CD4-positive, alpha-beta T cell (primary cell): ENCODE measurements at regions of chr6 and their contacts with region 1.

Region 1: DNA sequence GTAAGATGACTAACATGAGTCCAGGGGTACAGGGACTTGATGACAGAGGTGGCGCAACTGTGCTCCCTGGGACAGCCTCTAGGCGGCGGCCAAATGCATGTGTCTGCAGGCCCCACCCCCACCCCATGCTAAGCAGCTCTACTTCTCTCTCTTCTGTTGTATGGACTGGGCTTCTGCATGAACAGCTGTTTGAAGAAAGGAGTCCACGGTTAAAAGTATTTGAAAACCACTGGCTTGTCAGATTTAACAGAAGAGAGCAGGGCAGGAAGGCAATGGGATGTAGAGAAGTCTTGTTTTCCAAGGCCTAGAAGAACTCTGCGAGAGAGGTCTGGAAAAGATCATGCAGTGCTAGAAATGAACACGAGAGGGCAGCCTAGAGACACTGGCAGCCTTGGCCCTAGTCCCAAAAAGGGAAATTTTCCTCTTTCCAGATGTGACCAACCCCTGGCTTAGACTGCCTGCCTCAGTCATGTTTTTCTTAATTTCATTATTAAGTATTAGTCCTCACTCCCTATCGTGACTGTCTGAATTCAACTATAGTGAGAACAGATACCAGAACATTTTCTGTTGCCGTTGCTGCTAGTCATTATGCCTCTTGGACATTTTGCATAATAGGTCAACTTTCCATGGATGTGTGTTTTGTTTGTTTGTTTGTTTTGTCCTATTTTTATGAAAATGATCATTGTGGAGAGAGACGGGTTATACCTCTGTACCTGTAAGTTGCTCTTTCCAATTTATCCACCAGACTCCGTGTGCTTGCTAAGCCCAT is 265.0 kb downstream of the ADGRG6 start:
- DNase-seq: peak; percentile 14 to 76 (median 47)
- ATAC-seq: peak; percentile 62
- H3K4me3 ChIP-seq: no peak overlapping the region
- H3K4me3 Mint-ChIP-seq: peak overlapping the region; percentile 57
- H3K27ac ChIP-seq: no peak overlapping the region
- H3K27ac Mint-ChIP-seq: peak overlapping the region; percentile 79
- H3K4me1 ChIP-seq: peaks cover 35% of the 10 kb centered on the region
- H3K4me1 Mint-ChIP-seq: peaks cover 77% of the 10 kb centered on the region
- H3K27me3 ChIP-seq: no peaks in the 10 kb centered on the region
- H3K27me3 Mint-ChIP-seq: no peaks in the 10 kb centered on the region
- CTCF ChIP-seq: peak; percentile 82

Region 2: GRCh38 chr6:142155895-142156757 is 410.7 kb before region 1 on chr6:
- CTCF ChIA-PET with region 1: no interaction called
- POLR2A ChIA-PET with region 1: no interaction called
- intact Hi-C with region 1: loop called (anchors 10 kb)
- DNase-seq: peak in 3 of 14 experiments; percentile 38 to 48 (median 45)
- ATAC-seq: peak; percentile 76
- H3K4me3 ChIP-seq: no peak overlapping the region
- H3K4me3 Mint-ChIP-seq: no peak overlapping the region
- H3K27ac ChIP-seq: no peak overlapping the region
- H3K27ac Mint-ChIP-seq: peak overlapping the region; percentile 28
- H3K4me1 ChIP-seq: peaks cover 4% of the 10 kb centered on the region
- H3K4me1 Mint-ChIP-seq: peaks cover 67% of the 10 kb centered on the region
- H3K27me3 ChIP-seq: no peaks in the 10 kb centered on the region
- H3K27me3 Mint-ChIP-seq: no peaks in the 10 kb centered on the region
- CTCF ChIP-seq: peak; percentile 68

Region 3: DNA sequence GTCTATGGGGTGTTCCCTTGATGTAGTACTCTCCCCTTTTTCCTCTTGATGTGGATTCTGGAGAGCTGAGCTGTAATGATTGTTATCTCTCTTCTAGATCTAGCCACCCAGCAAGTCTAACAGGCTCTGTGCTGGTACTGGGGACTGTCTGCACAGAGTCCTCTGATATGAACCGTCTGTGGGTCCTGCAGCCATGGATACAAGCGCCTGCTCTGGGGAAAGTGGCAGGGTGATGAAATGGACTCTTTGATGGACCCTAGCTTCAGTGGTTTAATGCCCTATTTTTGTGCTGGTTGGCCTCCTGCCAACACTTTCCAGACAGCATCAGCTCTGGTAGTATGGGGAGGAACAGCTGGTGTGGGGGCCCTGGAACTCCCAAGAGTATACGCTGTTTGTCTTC is 48.7 kb before region 1 on chr6:
- CTCF ChIA-PET with region 1: no interaction called
- POLR2A ChIA-PET with region 1: no interaction called
- intact Hi-C with region 1: no loop called
- DNase-seq: no peak
- ATAC-seq: no peak
- H3K4me3 ChIP-seq: no peak overlapping the region
- H3K4me3 Mint-ChIP-seq: no peak overlapping the region
- H3K27ac ChIP-seq: no peak overlapping the region
- H3K27ac Mint-ChIP-seq: no peak overlapping the region
- H3K4me1 ChIP-seq: peaks cover 3% of the 10 kb centered on the region
- H3K4me1 Mint-ChIP-seq: no peaks in the 10 kb centered on the region
- H3K27me3 ChIP-seq: no peaks in the 10 kb centered on the region
- H3K27me3 Mint-ChIP-seq: no peaks in the 10 kb centered on the region
- CTCF ChIP-seq: no peak

Region 4: DNA sequence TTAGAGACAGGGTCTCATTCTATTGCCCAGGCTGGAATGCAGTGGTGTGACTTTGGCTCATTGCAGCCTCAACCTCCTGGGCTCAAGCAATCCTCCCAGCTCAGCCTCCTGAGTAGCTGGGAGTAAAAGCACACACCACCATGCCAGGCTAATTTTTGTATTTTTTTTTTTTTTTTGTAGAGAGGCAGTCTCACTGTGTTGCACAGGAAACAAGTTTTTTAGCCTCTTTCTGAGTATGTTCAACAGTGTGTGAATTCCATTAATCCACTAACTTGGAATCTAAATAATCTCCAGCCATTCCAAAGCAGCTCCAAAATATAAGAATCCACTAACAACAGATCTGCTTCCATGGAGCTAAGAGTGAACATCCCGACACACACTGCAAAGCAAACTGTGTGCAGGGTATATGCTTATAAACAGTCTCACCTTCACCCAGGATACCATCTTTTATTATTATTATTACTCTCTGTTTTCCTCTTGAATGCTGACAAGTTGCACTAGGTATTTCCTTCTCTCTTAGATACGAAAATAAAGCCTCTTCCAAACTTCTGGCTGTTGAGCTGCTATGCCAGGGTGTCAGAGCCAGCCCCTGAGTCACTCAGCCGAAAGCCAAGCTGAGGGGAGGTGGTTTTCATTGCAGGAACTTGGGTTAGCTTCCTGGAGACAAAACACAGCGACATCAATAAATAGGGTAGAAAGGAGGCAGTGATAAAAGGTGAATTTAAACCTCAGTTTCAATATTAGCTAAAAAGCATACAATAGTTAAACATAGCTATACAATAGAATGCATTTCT is 113.3 kb after region 1 on chr6:
- CTCF ChIA-PET with region 1: no interaction called
- POLR2A ChIA-PET with region 1: interaction called, 6 read pairs
- intact Hi-C with region 1: loop called in 1 of 2 experiments (anchors 10 kb)
- DNase-seq: peak in 10 of 14 experiments; percentile 11 to 71 (median 44)
- ATAC-seq: peak; percentile 86
- H3K4me3 ChIP-seq: no peak overlapping the region
- H3K4me3 Mint-ChIP-seq: peak overlapping the region; percentile 45
- H3K27ac ChIP-seq: no peak overlapping the region
- H3K27ac Mint-ChIP-seq: peak overlapping the region; percentile 34
- H3K4me1 ChIP-seq: peaks cover 6% of the 10 kb centered on the region
- H3K4me1 Mint-ChIP-seq: peaks cover 29% of the 10 kb centered on the region
- H3K27me3 ChIP-seq: no peaks in the 10 kb centered on the region
- H3K27me3 Mint-ChIP-seq: peaks cover 6% of the 10 kb centered on the region
- CTCF ChIP-seq: no peak

Region 5: DNA sequence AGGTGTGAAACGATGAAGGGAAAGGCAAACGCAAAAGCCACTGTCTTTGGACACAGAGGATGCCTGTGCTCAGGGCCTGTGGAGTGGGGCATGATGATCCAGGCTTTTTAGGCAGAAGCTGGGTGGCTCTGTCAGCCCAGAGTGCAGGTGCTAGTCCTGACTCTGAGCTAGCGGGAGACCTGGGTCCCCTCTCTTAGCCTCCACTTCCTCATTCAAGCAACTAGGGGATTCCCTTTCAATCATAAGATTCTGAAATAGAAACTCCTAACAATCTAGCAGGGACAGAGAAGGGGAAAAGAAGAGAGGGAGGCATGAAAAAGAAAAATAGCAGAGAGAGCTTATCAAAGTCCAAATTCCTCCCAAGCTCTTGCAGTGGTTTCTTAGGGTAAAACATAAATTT is 385.8 kb after region 1 on chr6:
- CTCF ChIA-PET with region 1: no interaction called
- POLR2A ChIA-PET with region 1: interaction called, 3 read pairs
- intact Hi-C with region 1: loop called in 1 of 2 experiments (anchors 5 kb)
- DNase-seq: peak in 1 of 14 experiments; percentile 46
- ATAC-seq: no peak
- H3K4me3 ChIP-seq: no peak overlapping the region
- H3K4me3 Mint-ChIP-seq: no peak overlapping the region
- H3K27ac ChIP-seq: no peak overlapping the region
- H3K27ac Mint-ChIP-seq: peak overlapping the region; percentile 98
- H3K4me1 ChIP-seq: no peaks in the 10 kb centered on the region
- H3K4me1 Mint-ChIP-seq: peaks cover 30% of the 10 kb centered on the region
- H3K27me3 ChIP-seq: no peaks in the 10 kb centered on the region
- H3K27me3 Mint-ChIP-seq: no peaks in the 10 kb centered on the region
- CTCF ChIP-seq: no peak

Region 6: DNA sequence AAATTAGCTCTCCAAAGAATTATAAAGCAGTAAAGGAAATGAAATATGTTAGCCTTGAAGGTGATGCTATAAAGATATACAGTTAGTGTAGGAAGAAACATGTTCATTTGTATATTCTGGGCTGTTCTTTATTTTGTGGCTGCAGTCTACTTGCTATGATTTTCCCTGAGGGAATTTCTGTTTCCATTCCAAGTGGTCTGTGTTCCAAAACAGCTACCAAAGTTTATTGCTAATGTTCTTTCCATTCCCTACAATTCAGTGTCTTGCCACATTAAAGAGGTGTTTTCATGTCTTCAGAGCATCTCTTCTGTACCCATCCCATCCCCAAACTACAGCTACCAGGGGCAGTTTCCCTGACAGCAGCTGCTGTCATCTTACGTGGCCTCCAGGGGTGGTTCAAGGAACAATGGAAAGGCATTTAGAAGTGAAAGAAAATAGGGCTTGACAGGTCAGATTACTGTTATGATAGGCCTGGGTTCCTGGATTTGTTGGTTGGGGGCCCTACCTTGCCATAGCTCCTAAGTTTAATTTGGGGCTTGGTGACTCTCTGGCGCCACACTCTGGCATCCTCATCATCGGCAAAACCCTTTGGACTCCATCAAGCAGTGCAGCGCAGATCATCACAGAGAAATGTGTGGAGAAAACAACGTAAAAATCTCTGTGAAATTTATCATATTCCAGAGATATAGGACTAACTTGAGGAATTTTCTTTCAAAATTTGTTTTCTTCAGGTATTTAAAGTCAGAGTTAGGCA is 460.1 kb after region 1 on chr6:
- CTCF ChIA-PET with region 1: no interaction called
- POLR2A ChIA-PET with region 1: no interaction called
- intact Hi-C with region 1: loop called in 1 of 2 experiments (anchors 10 kb)
- DNase-seq: peak; percentile 18 to 72 (median 40)
- ATAC-seq: peak; percentile 60
- H3K4me3 ChIP-seq: no peak overlapping the region
- H3K4me3 Mint-ChIP-seq: no peak overlapping the region
- H3K27ac ChIP-seq: no peak overlapping the region
- H3K27ac Mint-ChIP-seq: no peak overlapping the region
- H3K4me1 ChIP-seq: no peaks in the 10 kb centered on the region
- H3K4me1 Mint-ChIP-seq: no peaks in the 10 kb centered on the region
- H3K27me3 ChIP-seq: no peaks in the 10 kb centered on the region
- H3K27me3 Mint-ChIP-seq: no peaks in the 10 kb centered on the region
- CTCF ChIP-seq: peak; percentile 62